IMR-90 (cell line): ENCODE measurements at regions of chr18 and their contacts with region 1.

Region 1: DNA sequence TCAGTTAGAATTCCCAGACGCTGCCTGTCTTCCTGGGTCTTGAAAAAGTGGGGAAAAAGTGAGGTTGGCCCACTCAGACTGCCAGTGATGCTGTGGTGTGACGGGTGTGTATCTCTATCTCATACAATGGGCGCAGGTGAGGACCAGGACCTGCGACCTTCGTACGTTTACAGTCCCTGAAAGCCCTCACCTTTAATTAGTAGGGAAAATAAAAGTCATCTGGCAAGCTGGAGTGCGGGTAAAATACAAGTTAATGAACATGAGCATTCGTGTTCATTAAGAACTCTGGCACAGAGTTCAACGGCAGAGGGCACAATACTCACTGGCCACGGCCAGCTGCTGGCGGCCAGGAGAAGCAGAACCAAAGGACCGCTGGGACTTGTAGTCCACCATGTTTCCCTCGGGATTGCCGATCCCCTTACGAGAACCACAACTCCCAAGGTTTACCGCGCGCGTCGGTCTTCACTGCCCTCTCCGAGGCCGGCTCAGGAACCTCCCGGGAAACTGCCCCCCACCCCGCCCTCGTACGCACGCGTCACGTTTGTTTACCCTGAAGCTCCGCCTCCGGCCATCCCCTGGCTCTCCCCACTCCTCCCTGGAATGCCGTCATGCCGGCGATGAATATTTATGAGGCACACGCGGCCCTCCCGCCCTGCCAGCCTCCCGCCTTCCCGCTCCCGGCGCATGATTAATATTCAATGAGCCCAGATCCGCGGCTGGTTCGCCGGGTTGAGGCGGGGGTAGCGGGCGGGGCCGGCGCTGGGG is 488 bp upstream of the PHLPP1 start:
- DNase-seq: peak; percentile 100
- ATAC-seq: peak; percentile 91
- H3K4me3 ChIP-seq: peak overlapping the region; percentile 67; the same call in 1 of the 2 replicates
- H3K27ac ChIP-seq: peak overlapping the region; percentile 26; the same call in 1 of the 2 replicates
- H3K4me1 ChIP-seq: peaks cover 5% of the 10 kb centered on the region
- H3K27me3 ChIP-seq: no peaks in the 10 kb centered on the region
- CTCF ChIP-seq: peak; percentile 90
- POLR2A ChIP-seq: no peak; the same call in 1 of the 2 replicates
- RAD21 ChIP-seq: peak; percentile 92

Region 2: DNA sequence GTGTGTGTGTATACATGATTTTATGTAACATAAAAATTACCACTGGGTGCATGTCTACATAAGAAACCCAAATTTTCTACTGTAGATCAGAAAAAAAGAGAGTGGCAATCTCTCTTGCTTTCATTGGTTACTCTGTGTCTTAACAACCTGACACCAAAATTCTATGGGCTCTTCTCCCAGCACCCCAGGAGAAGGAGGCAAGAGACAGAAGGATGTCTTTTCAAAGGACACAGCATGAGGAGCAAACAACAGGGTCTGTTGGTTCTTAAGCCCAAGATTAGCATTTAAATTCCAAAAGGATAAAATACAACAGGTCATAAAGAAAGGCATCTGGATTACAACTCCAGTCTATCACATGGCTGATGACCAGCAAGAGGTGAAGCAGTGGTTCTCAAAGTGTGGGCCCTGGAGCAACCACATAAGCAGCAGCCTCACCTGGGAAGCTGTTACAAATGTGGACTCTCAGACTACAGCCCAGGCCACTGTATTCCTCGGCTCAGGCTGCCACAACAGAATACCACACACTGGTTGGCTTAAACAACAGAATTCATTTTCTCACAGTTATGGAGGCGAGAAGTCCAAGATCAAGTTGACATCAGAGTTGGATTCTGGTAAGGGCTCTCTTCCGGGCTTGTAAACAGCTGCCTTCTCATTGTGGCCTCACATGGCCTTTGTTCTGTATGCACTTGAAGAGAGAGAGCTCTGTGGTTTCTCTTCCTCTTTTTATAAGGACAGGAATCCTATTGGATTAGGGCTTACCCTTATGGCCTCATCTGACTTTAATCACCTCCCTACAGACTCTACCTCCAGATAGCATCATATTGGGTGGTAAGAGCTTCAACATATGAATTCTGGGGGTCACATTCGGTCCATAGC is 742.2 kb before region 1 on chr18:
- CTCF ChIA-PET with region 1: no interaction called
- POLR2A ChIA-PET with region 1: no interaction called
- dilution Hi-C with region 1: no loop called
- in situ Hi-C with region 1: no loop called
- intact Hi-C with region 1: no loop called
- DNase-seq: no peak
- ATAC-seq: no peak
- H3K4me3 ChIP-seq: no peak overlapping the region
- H3K27ac ChIP-seq: no peak overlapping the region
- H3K4me1 ChIP-seq: no peaks in the 10 kb centered on the region
- H3K27me3 ChIP-seq: no peaks in the 10 kb centered on the region
- CTCF ChIP-seq: no peak
- POLR2A ChIP-seq: no peak
- RAD21 ChIP-seq: no peak

Region 3: GRCh38 chr18:62584241-62585120 is 130.4 kb before region 1 on chr18:
- CTCF ChIA-PET with region 1: interaction called, 6 read pairs
- POLR2A ChIA-PET with region 1: no interaction called
- dilution Hi-C with region 1: no loop called
- in situ Hi-C with region 1: no loop called
- intact Hi-C with region 1: loop called (anchors 1 kb)
- DNase-seq: peak; percentile 88
- ATAC-seq: peak; percentile 93
- H3K4me3 ChIP-seq: no peak overlapping the region
- H3K27ac ChIP-seq: no peak overlapping the region
- H3K4me1 ChIP-seq: peaks cover 1% of the 10 kb centered on the region; the same call in 1 of the 2 replicates
- H3K27me3 ChIP-seq: peaks cover 3% of the 10 kb centered on the region; the same call in 1 of the 2 replicates
- CTCF ChIP-seq: peak; percentile 99
- POLR2A ChIP-seq: no peak
- RAD21 ChIP-seq: peak; percentile 91

Region 4: DNA sequence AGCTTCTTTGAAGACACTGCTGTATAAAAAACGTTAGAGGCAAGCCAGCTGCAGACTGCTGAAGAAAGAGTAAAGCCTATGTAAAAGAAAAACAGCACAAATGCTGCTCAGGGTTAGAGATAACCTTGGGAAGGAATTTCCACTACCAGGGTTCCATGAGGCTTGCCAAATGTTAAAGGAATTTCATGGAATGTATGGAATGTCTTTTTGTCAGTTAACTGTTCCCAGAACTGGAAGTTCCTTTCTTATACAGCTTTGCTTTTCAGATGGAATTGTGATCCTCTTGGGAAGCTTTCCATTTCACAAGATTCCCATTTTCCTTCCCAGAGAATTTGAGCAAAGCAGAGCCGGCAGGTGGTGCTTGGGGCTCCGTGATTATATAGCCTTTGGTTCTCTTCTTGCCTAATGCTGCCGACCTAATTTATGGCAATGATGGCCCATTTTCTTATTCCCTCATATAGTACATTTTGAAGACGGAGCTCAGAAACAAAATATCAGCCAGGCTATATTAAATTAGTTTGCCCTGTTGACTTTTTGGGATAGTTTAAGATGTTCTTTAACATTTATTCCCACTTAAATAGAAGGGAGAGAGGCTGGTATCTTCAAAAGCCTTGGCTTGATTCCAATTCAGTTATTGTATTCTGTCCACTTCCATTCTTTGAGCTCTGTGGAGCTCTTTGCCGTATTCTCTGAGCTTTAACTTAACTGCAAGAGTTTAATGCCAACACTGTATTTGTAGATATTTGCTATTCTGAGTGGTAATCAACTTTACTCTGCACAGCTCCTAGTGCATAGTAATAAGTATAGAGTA is 162.8 kb after region 1 on chr18:
- CTCF ChIA-PET with region 1: no interaction called
- POLR2A ChIA-PET with region 1: no interaction called
- dilution Hi-C with region 1: no loop called
- in situ Hi-C with region 1: no loop called
- intact Hi-C with region 1: loop called (anchors 1 kb)
- DNase-seq: peak; percentile 65
- ATAC-seq: peak; percentile 71
- H3K4me3 ChIP-seq: no peak overlapping the region
- H3K27ac ChIP-seq: no peak overlapping the region
- H3K4me1 ChIP-seq: peaks cover 16% of the 10 kb centered on the region
- H3K27me3 ChIP-seq: no peaks in the 10 kb centered on the region
- CTCF ChIP-seq: 0 out of 2 replicates have a peak, but pooled peaks have one; percentile 10
- POLR2A ChIP-seq: no peak
- RAD21 ChIP-seq: no peak

Region 5: GRCh38 chr18:62957885-62958472 is 243.1 kb after region 1 on chr18:
- CTCF ChIA-PET with region 1: interaction called, 13 read pairs
- POLR2A ChIA-PET with region 1: no interaction called
- dilution Hi-C with region 1: no loop called
- in situ Hi-C with region 1: no loop called
- intact Hi-C with region 1: loop called (anchors 2 kb)
- DNase-seq: peak; percentile 14
- ATAC-seq: peak; percentile 21; the same call in 1 of the 2 replicates
- H3K4me3 ChIP-seq: no peak overlapping the region
- H3K27ac ChIP-seq: no peak overlapping the region
- H3K4me1 ChIP-seq: peaks cover 4% of the 10 kb centered on the region
- H3K27me3 ChIP-seq: no peaks in the 10 kb centered on the region
- CTCF ChIP-seq: peak; percentile 42
- POLR2A ChIP-seq: no peak
- RAD21 ChIP-seq: peak; percentile 46